ENCODE measurements at regions of chr3 and their contacts with region 1.

Region 1: DNA sequence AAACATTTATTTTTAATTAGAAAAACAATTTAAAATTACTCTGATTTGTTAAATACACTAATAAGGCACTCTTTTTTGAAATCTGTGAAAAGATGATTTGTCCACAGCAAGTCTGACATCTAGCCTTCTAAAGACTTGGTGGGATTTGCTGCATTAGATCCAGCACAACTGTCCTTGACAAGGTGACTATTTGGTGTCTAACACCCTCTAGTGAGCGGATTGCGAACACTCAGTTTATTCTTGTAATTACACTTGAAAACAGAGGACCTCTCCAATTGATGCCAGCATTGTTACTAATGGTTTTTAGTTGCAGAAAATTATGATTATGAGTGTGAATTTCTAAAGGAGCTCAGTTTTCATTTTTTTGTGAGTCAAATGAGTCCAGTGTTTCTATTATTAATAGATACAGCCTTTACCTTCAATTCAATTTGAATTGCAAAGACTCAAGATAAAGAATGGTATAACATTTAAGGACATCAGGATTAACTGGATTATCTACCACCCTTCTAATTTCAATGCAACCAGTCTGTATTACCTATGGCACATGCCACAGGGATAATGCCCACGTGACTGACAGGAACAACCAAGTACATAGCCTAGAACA is 29.7 kb upstream of the STRIT1 start:
- DNase-seq: peak in 6 of 7 donors; percentile 9 to 61 (median 37)
- H3K4me3 ChIP-seq: no peak overlapping the region
- H3K27ac ChIP-seq: no peak overlapping the region
- H3K4me1 ChIP-seq: no peaks in the 10 kb centered on the region
- H3K27me3 ChIP-seq: no peaks in the 10 kb centered on the region
- CTCF ChIP-seq: peak; percentile 38 to 69 (median 59)
- POLR2A ChIP-seq: no peak

Region 2: DNA sequence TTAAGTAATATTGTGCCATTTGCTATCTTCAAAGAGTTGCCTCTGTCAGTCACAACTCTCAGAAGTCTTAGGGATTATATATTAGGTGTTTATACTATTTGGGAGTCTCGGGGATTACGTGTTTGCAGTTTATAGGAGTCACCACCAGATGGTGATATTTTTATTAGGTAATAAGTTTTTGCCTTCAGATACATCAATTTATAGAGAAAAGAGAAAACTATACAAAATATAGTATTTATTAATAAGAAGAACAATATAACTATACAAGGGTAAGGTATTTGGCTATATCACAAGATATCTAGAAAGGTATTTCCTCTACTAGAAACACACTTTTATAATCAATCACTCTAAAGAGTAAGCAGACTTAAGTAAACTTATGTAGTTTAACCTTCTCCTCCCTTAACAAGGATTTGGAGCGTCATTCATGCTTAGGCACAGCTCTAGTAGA is 988.2 kb before region 1 on chr3:
- intact Hi-C with region 1: loop called in 1 of 2 experiments (anchors 10 kb)
- DNase-seq: no peak
- H3K4me3 ChIP-seq: no peak overlapping the region
- H3K27ac ChIP-seq: no peak overlapping the region
- H3K4me1 ChIP-seq: no peaks in the 10 kb centered on the region
- H3K27me3 ChIP-seq: peaks cover under 1% of the 10 kb centered on the region
- CTCF ChIP-seq: peak; percentile 37 to 65 (median 44)
- POLR2A ChIP-seq: no peak

Region 3: GRCh38 chr3:154758109-154758868 is 564.9 kb before region 1 on chr3:
- intact Hi-C with region 1: loop called in 1 of 2 experiments (anchors 5 kb)
- DNase-seq: no peak
- H3K4me3 ChIP-seq: no peak overlapping the region
- H3K27ac ChIP-seq: no peak overlapping the region
- H3K4me1 ChIP-seq: no peaks in the 10 kb centered on the region
- H3K27me3 ChIP-seq: no peaks in the 10 kb centered on the region
- CTCF ChIP-seq: peak in 4 of 6 experiments; percentile 10 to 34 (median 30)
- POLR2A ChIP-seq: no peak

Region 4: GRCh38 chr3:155441026-155441425 is 117.9 kb after region 1 on chr3:
- intact Hi-C with region 1: no loop called
- DNase-seq: no peak
- H3K4me3 ChIP-seq: no peak overlapping the region
- H3K27ac ChIP-seq: no peak overlapping the region
- H3K4me1 ChIP-seq: no peaks in the 10 kb centered on the region
- H3K27me3 ChIP-seq: no peaks in the 10 kb centered on the region
- CTCF ChIP-seq: no peak
- POLR2A ChIP-seq: no peak

Measured in adrenal gland (tissue), 19 donors.